ENCODE measurements at regions of chr18 and their contacts with region 1.

Region 1: DNA sequence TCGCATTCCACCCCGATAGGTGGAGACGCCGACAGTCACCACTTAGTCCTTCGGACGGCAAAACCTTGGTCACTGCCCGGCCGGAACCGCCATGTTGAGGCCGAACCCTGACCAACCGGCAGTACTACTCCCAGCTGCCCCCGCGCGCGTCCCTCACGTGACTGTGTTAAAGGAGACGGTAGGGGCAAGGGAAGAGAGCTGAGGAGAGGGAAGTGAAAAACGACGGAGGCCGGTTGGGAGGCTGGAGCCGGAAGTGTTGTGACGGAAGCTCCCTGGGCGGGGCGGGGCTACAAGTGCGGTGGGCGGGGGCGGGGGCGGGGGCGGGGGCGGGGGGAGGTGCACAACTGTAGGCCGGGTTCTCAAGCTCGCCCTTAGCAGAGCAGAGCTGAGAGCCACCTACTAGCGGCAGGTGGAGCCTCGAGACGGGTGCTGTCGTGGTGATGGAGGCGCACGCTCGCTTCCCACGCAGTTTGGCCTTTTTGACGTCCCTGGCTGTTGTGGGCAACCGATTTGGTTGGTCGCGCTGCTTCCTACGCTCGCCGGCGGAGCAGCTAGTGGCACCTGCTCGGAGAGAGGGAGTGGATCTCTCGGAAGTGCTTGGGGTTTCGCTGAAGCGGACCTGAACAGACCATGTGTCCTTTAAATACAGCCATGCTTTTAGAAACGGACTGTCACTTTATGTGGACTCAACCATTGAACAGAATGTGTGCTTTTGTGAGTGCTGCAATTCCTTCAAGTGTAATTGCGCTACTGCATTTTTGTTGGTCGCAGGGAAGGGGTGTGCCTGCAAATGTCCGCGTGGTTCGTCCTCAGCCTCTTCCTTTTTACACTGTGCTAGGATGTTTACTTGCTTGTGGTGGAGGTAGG is at the start of gene TRAPPC8:
- DNase-seq: peak; percentile 98 to 99
- ATAC-seq: peak; percentile 96 to 98 (median 98)
- H3K4me3 ChIP-seq: peak within 1 kb of the TSS; percentile 74
- H3K27ac ChIP-seq: peak within 1 kb of the TSS; percentile 91
- H3K4me1 ChIP-seq: peaks cover 41% of the 10 kb centered on the region
- H3K27me3 ChIP-seq: no peaks in the 10 kb centered on the region
- CTCF ChIP-seq: no peak
- total RNA-seq, gene TRAPPC8: 29.7 to 36.8 (median 34.5) TPM

Region 2: DNA sequence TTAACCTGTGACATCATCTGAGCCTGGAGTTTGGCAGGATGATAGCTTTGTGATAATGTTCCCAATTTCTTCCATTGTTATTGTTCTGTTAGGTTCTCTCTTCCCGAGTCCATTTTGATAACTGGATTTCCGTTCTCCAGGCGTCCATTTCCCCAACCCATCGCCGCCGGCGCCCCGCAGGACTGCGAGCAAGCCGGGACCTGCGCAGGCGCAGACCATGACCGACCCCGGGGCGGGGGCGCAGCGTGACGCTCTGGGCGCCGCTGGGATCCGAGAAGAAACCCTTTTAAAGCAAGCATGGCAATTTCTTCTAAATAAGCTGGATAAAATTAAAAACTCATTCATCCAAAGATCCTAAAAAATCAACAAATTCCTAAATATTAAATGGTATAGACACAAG is 182.5 kb before region 1 on chr18 and contains the start of gene SLC25A52:
- intact Hi-C with region 1: no loop called
- DNase-seq: peak in 1 of 2 donors; percentile 42
- ATAC-seq: no peak
- H3K4me3 ChIP-seq: no peak within 1 kb of the TSS
- H3K27ac ChIP-seq: peak within 1 kb of the TSS; percentile 13
- H3K4me1 ChIP-seq: peaks cover 4% of the 10 kb centered on the region
- H3K27me3 ChIP-seq: no peaks in the 10 kb centered on the region
- CTCF ChIP-seq: no peak
- total RNA-seq, gene SLC25A52: not detected

Region 3: GRCh38 chr18:32092422-32093101 is 149.3 kb after region 1 on chr18:
- intact Hi-C with region 1: loop called (anchors 5 to 10 kb)
- DNase-seq: peak; percentile 99 to 100
- ATAC-seq: peak; percentile 96 to 98 (median 97)
- H3K4me3 ChIP-seq: peak overlapping the region; percentile 97
- H3K27ac ChIP-seq: peak overlapping the region; percentile 100
- H3K4me1 ChIP-seq: peaks cover 36% of the 10 kb centered on the region
- H3K27me3 ChIP-seq: no peaks in the 10 kb centered on the region
- CTCF ChIP-seq: no peak

Measured in psoas muscle (tissue), 8 donors.